ENCODE measurements at regions of chr4 and their contacts with region 1.

Region 1: DNA sequence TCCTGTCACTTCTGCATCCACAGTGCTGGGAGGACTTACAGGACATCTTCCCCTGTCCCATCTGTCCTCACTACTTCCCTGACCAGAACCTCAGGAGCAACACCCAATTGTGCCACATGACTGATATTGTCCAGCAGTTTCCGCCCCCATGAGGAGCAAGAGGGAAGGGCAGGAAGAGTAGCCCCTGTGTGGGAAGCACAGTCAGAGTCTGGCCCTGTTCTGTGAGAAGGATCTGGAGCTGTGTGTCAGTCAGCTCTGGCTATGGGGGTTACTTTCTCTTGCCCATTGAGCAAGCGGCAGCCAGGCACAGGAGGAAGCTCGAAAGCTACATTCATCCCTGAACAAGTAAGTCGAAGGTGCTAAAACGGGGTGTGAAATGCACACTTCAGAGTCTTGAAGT is 14.8 kb upstream of the TRIM60 start:
- DNase-seq: peak in 1 of 2 experiments; percentile 66
- H3K4me3 ChIP-seq: no peak overlapping the region
- H3K27ac ChIP-seq: no peak overlapping the region
- H3K4me1 ChIP-seq: no peaks in the 10 kb centered on the region
- H3K27me3 ChIP-seq: no peaks in the 10 kb centered on the region
- CTCF ChIP-seq: peak; percentile 45 to 82 (median 71); a peak in 3 of 4 replicates
- EP300 ChIP-seq: no peak
- POLR2A ChIP-seq: no peak
- RAD21 ChIP-seq: peak; percentile 45 to 62

Region 2: GRCh38 chr4:164813554-164813953 is 203.4 kb before region 1 on chr4:
- CTCF ChIA-PET with region 1: no interaction called
- POLR2A ChIA-PET with region 1: no interaction called
- DNase-seq: no peak
- H3K4me3 ChIP-seq: no peak overlapping the region
- H3K27ac ChIP-seq: no peak overlapping the region
- H3K4me1 ChIP-seq: no peaks in the 10 kb centered on the region; a peak in 1 of 7 replicates
- H3K27me3 ChIP-seq: no peaks in the 10 kb centered on the region
- CTCF ChIP-seq: no peak
- EP300 ChIP-seq: no peak
- POLR2A ChIP-seq: no peak
- RAD21 ChIP-seq: no peak

Region 3: GRCh38 chr4:165006456-165006855 is 10.5 kb before region 1 on chr4:
- CTCF ChIA-PET with region 1: interaction called, 19 read pairs
- POLR2A ChIA-PET with region 1: no interaction called
- DNase-seq: no peak
- H3K4me3 ChIP-seq: no peak overlapping the region
- H3K27ac ChIP-seq: no peak overlapping the region
- H3K4me1 ChIP-seq: no peaks in the 10 kb centered on the region
- H3K27me3 ChIP-seq: no peaks in the 10 kb centered on the region
- CTCF ChIP-seq: no peak
- EP300 ChIP-seq: no peak
- POLR2A ChIP-seq: no peak
- RAD21 ChIP-seq: no peak

Region 4: DNA sequence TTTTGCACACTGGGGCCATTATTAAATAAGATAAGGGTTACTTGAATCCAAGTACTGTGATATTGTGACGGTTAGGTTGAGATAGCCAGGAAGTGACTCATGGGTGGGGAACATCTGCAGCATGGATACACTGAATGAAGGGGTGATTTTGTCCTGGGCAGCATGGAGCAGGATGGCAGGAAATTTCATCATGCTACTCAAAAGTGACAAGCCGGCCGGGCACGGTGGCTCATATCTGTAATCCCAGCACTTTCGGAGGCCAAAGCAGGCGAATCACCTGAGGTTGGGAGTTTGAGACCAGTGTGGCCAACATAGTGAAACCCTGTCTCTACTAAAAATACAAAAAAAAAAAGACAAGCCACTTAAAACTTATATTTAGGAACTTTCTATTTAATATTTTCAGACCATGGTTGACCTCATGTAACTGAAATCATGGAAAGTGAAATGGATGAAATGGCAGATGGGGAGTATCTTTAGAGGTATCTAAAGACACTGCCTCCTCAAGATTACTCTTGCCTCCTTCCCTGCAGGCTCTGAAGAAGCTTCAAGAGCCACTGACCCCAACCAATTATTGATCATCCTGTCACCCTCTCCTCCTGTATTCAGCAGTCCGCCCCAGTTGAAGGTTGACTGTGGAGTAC is 10.9 kb after region 1 on chr4:
- CTCF ChIA-PET with region 1: interaction called, 14 read pairs
- POLR2A ChIA-PET with region 1: no interaction called
- DNase-seq: no peak
- H3K4me3 ChIP-seq: no peak overlapping the region
- H3K27ac ChIP-seq: no peak overlapping the region
- H3K4me1 ChIP-seq: no peaks in the 10 kb centered on the region
- H3K27me3 ChIP-seq: no peaks in the 10 kb centered on the region
- CTCF ChIP-seq: no peak
- EP300 ChIP-seq: no peak
- POLR2A ChIP-seq: no peak
- RAD21 ChIP-seq: no peak